IMR-90 (cell line): ENCODE measurements at regions of chr10 and their contacts with region 1.

Region 1: GRCh38 chr10:8033812-8034465 is 20.5 kb upstream of the GATA3 start:
- DNase-seq: no peak
- ATAC-seq: peak; percentile 27
- H3K4me3 ChIP-seq: no peak overlapping the region
- H3K27ac ChIP-seq: no peak overlapping the region
- H3K4me1 ChIP-seq: no peaks in the 10 kb centered on the region; the same call in 1 of the 2 replicates
- H3K27me3 ChIP-seq: peaks cover 78% of the 10 kb centered on the region
- CTCF ChIP-seq: no peak
- POLR2A ChIP-seq: no peak
- RAD21 ChIP-seq: no peak

Region 2: DNA sequence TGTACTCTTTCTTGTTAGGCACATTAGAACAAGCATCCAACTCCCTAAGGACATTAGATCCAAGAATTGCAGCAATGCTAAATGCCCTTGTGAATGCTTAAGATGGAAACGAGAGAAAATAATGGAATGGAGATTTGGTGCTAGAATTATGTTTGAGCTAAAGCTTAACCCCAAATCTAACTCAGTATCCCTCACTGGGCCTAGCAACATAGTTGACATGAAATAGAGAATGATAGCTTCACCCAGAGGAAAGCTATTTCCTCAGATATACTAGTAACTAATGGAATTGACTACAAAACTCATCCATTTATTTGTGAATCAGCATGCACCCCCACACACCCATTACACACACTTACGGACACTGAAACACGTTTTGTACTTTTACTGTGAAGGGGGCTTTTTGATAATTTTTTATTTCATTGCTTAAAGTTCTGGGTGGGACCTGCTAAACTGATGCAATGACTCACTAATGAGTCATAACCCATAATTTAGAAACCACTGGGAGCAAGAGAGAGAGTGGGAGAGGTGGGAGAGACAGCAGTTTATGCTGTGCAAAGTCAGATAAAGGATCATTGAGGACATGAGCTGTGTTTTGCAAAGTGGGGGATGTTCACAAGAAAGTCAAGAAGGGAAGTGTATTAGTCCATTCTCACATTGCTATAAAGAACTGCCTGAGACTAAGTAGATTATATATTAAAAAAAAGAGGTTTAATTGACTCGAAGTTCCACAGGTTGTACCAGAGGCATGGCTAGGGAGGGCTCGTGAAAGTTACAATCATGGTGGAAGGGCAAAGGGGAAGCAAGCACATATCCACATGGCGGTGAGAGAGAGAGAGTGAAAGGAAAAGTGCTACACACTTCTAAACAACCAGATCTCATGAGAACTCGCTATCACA is 1005.8 kb before region 1 on chr10:
- CTCF ChIA-PET with region 1: no interaction called
- POLR2A ChIA-PET with region 1: no interaction called
- dilution Hi-C with region 1: no loop called
- in situ Hi-C with region 1: no loop called
- intact Hi-C with region 1: no loop called
- DNase-seq: peak; percentile 43
- ATAC-seq: no peak
- H3K4me3 ChIP-seq: no peak overlapping the region
- H3K27ac ChIP-seq: no peak overlapping the region
- H3K4me1 ChIP-seq: no peaks in the 10 kb centered on the region
- H3K27me3 ChIP-seq: no peaks in the 10 kb centered on the region
- CTCF ChIP-seq: no peak
- POLR2A ChIP-seq: no peak
- RAD21 ChIP-seq: no peak

Region 3: DNA sequence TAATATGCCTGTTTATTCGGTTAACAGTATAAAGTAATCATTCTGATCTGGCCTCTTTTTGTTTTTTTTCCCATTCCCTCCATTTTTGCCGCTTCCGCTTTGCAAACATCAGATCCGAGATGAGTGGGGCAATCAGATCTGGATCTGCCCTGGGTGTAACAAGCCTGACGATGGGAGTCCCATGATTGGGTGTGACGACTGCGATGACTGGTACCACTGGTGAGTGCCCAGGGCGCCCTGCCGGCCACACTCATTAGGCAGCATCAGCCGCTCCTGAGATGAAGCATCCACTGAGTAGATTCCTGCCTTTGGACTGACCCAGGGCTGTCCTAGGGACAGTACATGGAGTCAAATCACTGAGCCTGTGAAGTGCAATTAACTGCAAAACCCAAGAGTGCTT is 20.3 kb before region 1 on chr10:
- CTCF ChIA-PET with region 1: no interaction called
- POLR2A ChIA-PET with region 1: interaction called, 13 read pairs
- dilution Hi-C with region 1: no loop called
- in situ Hi-C with region 1: no loop called
- intact Hi-C with region 1: no loop called
- DNase-seq: no peak
- ATAC-seq: no peak
- H3K4me3 ChIP-seq: no peak overlapping the region
- H3K27ac ChIP-seq: no peak overlapping the region
- H3K4me1 ChIP-seq: peaks cover 6% of the 10 kb centered on the region
- H3K27me3 ChIP-seq: no peaks in the 10 kb centered on the region
- CTCF ChIP-seq: no peak
- POLR2A ChIP-seq: no peak
- RAD21 ChIP-seq: no peak

Region 4: GRCh38 chr10:8121201-8121890 is 87.4 kb after region 1 on chr10:
- CTCF ChIA-PET with region 1: no interaction called
- POLR2A ChIA-PET with region 1: no interaction called
- dilution Hi-C with region 1: no loop called
- in situ Hi-C with region 1: no loop called
- intact Hi-C with region 1: no loop called
- DNase-seq: no peak
- ATAC-seq: no peak
- H3K4me3 ChIP-seq: no peak overlapping the region
- H3K27ac ChIP-seq: no peak overlapping the region
- H3K4me1 ChIP-seq: no peaks in the 10 kb centered on the region
- H3K27me3 ChIP-seq: no peaks in the 10 kb centered on the region
- CTCF ChIP-seq: no peak
- POLR2A ChIP-seq: no peak
- RAD21 ChIP-seq: no peak

Region 5: GRCh38 chr10:8245131-8245813 is 211.3 kb after region 1 on chr10:
- CTCF ChIA-PET with region 1: no interaction called
- POLR2A ChIA-PET with region 1: no interaction called
- dilution Hi-C with region 1: no loop called
- in situ Hi-C with region 1: no loop called
- intact Hi-C with region 1: no loop called
- DNase-seq: no peak
- ATAC-seq: no peak
- H3K4me3 ChIP-seq: no peak overlapping the region
- H3K27ac ChIP-seq: no peak overlapping the region
- H3K4me1 ChIP-seq: no peaks in the 10 kb centered on the region
- H3K27me3 ChIP-seq: no peaks in the 10 kb centered on the region
- CTCF ChIP-seq: no peak
- POLR2A ChIP-seq: no peak
- RAD21 ChIP-seq: no peak